ENCODE measurements at regions of chr3 and their contacts with region 1.

Region 1: DNA sequence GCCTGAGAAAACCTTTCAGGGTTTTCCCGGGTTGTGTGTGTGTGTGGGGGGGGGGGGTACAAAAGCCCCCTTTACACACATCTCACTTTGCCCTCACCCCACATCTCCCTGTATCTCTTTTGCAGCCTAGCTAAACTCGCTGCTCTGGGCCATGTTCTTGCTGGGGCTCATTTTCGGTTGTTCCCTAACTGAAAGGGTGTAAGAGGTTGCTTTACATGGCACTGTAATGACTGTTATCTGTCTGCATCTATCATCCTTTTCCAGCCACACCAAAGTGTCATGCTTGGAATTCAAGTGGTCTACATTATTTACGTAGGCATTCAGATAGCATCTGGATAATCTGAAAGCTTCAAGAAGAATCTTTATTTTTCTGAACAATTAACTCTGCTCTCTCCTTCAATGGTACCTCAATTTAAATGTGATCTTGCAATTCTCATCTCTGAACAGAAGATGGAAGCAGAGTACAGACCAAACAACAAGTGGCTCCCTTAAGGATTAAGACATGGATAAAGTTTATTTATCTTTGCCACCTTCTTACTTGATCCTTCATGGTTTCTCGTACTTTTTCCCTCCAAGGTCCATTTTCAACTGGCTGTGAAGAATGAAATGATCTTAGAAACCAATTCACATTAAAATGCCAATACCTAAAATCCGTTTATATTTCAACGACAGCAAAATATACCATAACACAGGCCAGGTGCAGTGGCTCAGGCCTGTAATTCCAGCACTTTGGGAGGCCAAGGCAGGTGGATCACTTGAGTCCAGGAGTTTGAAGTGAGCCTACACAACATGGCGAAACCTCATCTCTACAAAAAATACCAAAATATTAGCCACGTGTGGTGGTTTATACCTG is 34.9 kb downstream of the DCLK3 start:
- DNase-seq: no peak
- ATAC-seq: no peak
- H3K4me3 ChIP-seq: no peak overlapping the region
- H3K27ac ChIP-seq: no peak overlapping the region
- H3K4me1 ChIP-seq: peaks cover 7 to 9% of the 10 kb centered on the region in 2 donors
- H3K27me3 ChIP-seq: no peaks in the 10 kb centered on the region
- CTCF ChIP-seq: peak in 4 of 5 experiments; percentile 49 to 72 (median 57)
- POLR2A ChIP-seq: no peak

Region 2: GRCh38 chr3:36147934-36148333 is 581.5 kb before region 1 on chr3:
- in situ Hi-C with region 1: no loop called
- intact Hi-C with region 1: no loop called
- DNase-seq: no peak
- ATAC-seq: no peak
- H3K4me3 ChIP-seq: no peak overlapping the region
- H3K27ac ChIP-seq: no peak overlapping the region
- H3K4me1 ChIP-seq: no peaks in the 10 kb centered on the region
- H3K27me3 ChIP-seq: no peaks in the 10 kb centered on the region
- CTCF ChIP-seq: no peak
- POLR2A ChIP-seq: no peak

Region 3: DNA sequence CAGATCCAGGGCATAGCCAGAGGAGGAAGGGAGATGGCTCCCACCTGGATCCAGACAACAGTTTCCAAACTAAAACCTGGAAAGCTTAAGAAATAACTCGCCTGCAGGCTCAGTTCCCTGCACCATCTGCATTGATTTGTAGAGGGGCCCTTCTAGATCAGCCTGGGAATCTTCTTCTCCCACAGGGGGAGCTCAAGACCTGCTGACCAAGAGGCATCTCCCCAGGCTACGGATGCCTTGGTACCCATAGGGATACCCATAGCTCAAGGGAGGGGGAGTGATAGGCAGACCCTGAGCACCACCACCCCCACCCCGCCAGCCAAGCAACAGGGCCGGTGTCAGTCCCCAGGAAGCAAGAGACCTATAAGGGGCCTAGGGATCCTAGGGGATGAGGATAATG is 62.9 kb after region 1 on chr3:
- in situ Hi-C with region 1: no loop called
- intact Hi-C with region 1: no loop called
- DNase-seq: no peak
- ATAC-seq: no peak
- H3K4me3 ChIP-seq: no peak overlapping the region
- H3K27ac ChIP-seq: no peak overlapping the region
- H3K4me1 ChIP-seq: no peaks in the 10 kb centered on the region
- H3K27me3 ChIP-seq: no peaks in the 10 kb centered on the region
- CTCF ChIP-seq: no peak
- POLR2A ChIP-seq: no peak

Region 4: DNA sequence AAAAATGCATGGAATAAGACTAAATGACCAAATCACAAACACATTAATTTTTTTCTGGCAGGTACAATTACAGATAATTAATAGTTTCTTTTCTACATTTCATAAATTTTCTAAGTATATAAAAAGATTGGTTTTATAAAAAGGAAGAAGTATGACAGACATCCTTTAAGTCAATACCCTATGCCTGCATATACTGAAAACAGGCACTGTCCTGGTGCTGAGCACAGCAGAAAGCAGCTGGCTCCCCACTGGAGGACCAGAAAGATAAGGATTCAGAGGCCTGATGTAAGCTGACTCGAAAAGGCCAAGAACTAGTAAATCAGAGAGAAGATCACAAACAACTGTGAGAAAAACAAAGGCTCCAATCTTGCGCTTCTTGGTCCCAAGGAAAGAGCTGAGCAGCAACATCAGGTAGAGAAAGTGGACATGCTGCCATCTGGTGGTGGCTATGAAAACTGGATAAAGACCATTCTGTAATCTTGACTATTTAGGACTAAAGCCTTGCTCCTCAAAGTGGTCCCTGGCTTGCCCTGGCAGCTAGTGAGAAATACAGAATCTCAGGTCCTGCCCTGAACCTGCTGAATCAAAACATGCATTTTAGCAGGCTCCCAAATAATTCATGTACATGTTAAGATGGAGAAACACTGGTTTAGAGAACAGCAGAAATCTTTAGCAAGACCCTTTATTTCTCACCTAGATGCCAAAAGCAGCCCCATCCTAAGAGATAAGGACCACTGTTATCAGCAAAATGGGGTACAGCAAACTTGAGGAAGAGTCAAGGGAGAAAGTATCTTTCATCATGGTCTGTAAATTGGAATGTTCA is 139.4 kb after region 1 on chr3:
- in situ Hi-C with region 1: loop called (anchors 5 to 10 kb)
- intact Hi-C with region 1: loop called (anchors 1 kb)
- DNase-seq: peak in 1 of 2 donors; percentile 4
- ATAC-seq: peak; percentile 56 to 61
- H3K4me3 ChIP-seq: no peak overlapping the region
- H3K27ac ChIP-seq: no peak overlapping the region
- H3K4me1 ChIP-seq: no peaks in the 10 kb centered on the region
- H3K27me3 ChIP-seq: no peaks in the 10 kb centered on the region
- CTCF ChIP-seq: peak; percentile 29 to 76 (median 58)
- POLR2A ChIP-seq: no peak

Region 5: GRCh38 chr3:36957862-36958686 is 228.6 kb after region 1 on chr3:
- in situ Hi-C with region 1: loop called in 3 of 4 experiments (anchors 5 to 25 kb)
- intact Hi-C with region 1: loop called (anchors 2 kb)
- DNase-seq: no peak
- ATAC-seq: no peak
- H3K4me3 ChIP-seq: no peak overlapping the region
- H3K27ac ChIP-seq: no peak overlapping the region
- H3K4me1 ChIP-seq: no peaks in the 10 kb centered on the region
- H3K27me3 ChIP-seq: no peaks in the 10 kb centered on the region
- CTCF ChIP-seq: no peak
- POLR2A ChIP-seq: no peak

Region 6: DNA sequence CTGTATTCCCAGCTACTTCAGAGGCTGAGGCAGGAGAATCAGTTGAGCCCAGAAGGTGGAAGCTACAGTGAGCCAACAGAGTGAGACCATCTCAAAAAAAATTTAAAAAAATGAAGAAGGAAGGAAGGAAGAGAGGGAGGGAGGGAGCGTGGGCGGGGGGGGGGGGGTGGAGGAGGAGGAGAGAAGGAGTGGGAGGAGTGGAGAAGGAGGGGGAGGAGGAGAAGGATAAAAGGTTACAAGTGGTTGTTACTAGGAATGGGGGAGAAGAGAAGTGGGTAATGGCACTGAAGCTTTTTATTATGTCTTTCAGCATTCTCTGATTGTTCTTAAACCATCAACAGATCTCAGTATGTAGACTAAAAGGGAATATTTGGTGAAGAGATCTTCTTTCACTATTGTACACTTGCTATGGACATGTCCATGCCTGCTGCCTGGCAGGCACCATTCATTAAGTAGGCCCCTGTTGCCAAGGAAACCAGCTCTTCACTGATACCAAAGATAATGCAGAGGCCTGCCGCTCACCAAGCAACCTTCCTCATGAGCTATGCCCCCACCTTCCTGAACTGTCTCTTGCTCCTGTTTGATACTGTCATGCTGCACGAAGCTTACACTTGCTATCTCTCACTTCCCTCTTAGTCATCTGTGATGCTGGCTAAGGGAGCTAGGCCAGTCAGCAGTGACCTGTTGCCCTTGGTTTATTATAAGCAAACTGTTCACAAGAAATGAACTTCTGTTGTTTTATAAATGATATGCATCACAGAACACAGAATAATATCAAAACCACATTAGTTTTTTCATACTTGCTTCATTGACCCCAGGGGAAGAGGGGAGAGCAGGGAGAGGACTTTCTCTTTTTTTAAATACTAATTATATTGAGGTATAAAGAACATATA is 240.4 kb after region 1 on chr3:
- in situ Hi-C with region 1: loop called in 2 of 4 experiments (anchors 5 to 25 kb)
- intact Hi-C with region 1: no loop called
- DNase-seq: no peak
- ATAC-seq: peak in 1 of 2 donors; percentile 30
- H3K4me3 ChIP-seq: no peak overlapping the region
- H3K27ac ChIP-seq: no peak overlapping the region
- H3K4me1 ChIP-seq: no peaks in the 10 kb centered on the region
- H3K27me3 ChIP-seq: no peaks in the 10 kb centered on the region
- CTCF ChIP-seq: no peak
- POLR2A ChIP-seq: no peak

Region 7: DNA sequence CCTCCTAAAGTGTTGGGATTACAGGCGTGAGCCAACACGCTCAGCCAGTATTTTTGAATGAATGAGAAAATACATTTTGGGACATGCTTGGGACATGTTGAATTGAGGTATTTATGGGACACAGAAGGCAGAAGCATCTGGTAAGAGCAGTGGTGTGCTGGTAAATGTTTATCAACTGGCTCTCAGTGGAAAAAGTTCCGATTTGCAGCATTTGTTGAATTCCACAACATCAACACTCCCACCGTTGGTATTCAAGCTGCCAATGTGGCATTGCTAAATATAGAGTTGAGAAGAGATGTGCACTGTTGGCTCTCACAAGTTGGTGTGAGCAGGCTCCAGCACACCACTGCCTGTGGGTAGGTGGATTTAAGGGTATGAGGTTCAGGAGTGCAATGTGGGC is 480.8 kb after region 1 on chr3:
- in situ Hi-C with region 1: loop called in 1 of 4 experiments (anchors 25 kb)
- intact Hi-C with region 1: loop called (anchors 10 kb)
- DNase-seq: no peak
- ATAC-seq: no peak
- H3K4me3 ChIP-seq: no peak overlapping the region
- H3K27ac ChIP-seq: no peak overlapping the region
- H3K4me1 ChIP-seq: peaks cover 0 to 3% of the 10 kb centered on the region in 2 donors
- H3K27me3 ChIP-seq: no peaks in the 10 kb centered on the region
- CTCF ChIP-seq: no peak
- POLR2A ChIP-seq: no peak

Region 8: GRCh38 chr3:37221407-37221806 is 492.0 kb after region 1 on chr3:
- in situ Hi-C with region 1: loop called in 1 of 4 experiments (anchors 25 kb)
- intact Hi-C with region 1: loop called (anchors 10 kb)
- DNase-seq: no peak
- ATAC-seq: no peak
- H3K4me3 ChIP-seq: no peak overlapping the region
- H3K27ac ChIP-seq: no peak overlapping the region
- H3K4me1 ChIP-seq: no peaks in the 10 kb centered on the region
- H3K27me3 ChIP-seq: no peaks in the 10 kb centered on the region
- CTCF ChIP-seq: no peak
- POLR2A ChIP-seq: no peak

Measured in gastrocnemius medialis (tissue), 4 donors.